Ascending aorta (tissue), 2 donors: ENCODE measurements at regions of chr6 and their contacts with region 1.

Region 1: DNA sequence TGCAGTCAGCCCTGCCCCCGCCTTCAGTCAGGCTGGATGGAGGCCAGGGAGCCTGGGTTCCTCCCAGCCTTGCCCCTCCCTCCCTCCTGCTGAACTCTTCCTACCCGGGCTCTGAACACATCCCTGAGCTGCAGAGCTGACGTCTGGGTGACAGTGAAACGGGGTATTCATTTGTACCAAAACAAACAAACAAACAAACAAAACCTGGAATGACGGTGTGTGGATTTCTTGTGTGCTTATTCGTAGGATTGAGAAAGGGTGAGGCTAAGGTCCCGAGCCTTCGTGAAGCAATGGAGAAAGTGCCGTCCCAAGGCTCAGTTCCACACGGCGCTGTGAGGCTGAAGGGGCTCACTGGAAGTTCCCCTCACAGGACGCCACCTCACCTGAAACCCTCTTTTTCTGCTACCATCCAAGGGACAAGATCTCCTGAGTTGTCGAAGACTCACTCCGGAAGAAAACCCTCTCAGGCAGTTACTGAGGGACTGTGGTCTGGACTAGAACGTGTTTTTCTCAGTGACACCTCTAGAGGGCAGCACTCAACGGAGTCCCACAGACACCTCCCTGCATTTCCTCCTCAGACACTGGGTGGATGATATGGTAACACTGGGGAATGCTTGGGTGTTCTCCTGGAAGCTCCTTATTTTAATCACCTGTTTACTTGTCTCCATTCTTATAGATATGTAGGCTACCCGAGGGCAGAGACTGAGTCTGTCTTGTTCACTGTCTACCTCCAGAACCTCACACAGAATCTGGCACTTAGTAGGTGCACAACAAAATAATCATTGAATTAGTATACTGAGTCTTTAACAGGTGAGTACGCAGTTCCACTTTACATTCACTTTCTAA is 27.3 kb downstream of the GSTA3 start:
- DNase-seq: peak in 1 of 2 donors; percentile 77
- H3K4me3 ChIP-seq: peak overlapping the region; percentile 62 to 63
- H3K27ac ChIP-seq: no peak overlapping the region
- H3K4me1 ChIP-seq: no peaks in the 10 kb centered on the region
- H3K27me3 ChIP-seq: no peaks in the 10 kb centered on the region
- CTCF ChIP-seq: peak; percentile 54 to 82 (median 72)

Region 2: GRCh38 chr6:53064726-53065215 is 182.6 kb after region 1 on chr6:
- intact Hi-C with region 1: loop called (anchors 1 kb)
- DNase-seq: peak; percentile 95 to 99
- H3K4me3 ChIP-seq: peak overlapping the region; percentile 97 to 98
- H3K27ac ChIP-seq: peak overlapping the region; percentile 94 to 95
- H3K4me1 ChIP-seq: peaks cover under 1 to 4% of the 10 kb centered on the region in 2 donors
- H3K27me3 ChIP-seq: no peaks in the 10 kb centered on the region
- CTCF ChIP-seq: no peak

Region 3: GRCh38 chr6:53128842-53129241 is 246.6 kb after region 1 on chr6:
- intact Hi-C with region 1: no loop called
- DNase-seq: no peak
- H3K4me3 ChIP-seq: no peak overlapping the region
- H3K27ac ChIP-seq: no peak overlapping the region
- H3K4me1 ChIP-seq: no peaks in the 10 kb centered on the region
- H3K27me3 ChIP-seq: no peaks in the 10 kb centered on the region
- CTCF ChIP-seq: no peak

Region 4: DNA sequence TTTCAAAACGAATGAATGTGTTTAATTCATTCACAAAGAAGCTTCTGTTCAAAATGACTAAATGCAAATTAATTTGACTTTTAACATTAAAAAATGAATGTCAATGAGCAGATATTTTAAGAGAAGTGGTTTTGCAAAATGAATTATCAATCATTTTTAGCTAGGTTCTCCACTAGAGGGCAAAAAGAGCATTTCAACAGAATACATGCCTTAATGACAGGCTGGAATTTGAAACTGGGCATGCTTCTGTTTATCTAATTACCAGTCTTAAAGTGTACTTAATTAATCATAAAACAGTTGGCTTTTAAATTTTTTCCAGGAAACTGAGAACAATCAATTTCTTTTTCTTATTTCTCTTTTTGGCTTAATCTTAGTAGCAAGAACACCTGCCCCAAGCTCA is 1362.2 kb after region 1 on chr6:
- intact Hi-C with region 1: no loop called
- DNase-seq: no peak
- H3K4me3 ChIP-seq: no peak overlapping the region
- H3K27ac ChIP-seq: no peak overlapping the region
- H3K4me1 ChIP-seq: no peaks in the 10 kb centered on the region
- H3K27me3 ChIP-seq: no peaks in the 10 kb centered on the region
- CTCF ChIP-seq: peak in 2 of 3 experiments; percentile 16 to 41